Activated CD4-positive, alpha-beta T cell treated with anti-CD3 and anti-CD28 coated beads for 36 hours (primary cell): ENCODE measurements at regions of chr14 and their contacts with region 1.

Region 1: GRCh38 chr14:100239840-100240724 is 1.1 kb downstream of the YY1 start:
- DNase-seq: peak; percentile 93
- ATAC-seq: peak; percentile 40
- H3K4me3 Mint-ChIP-seq: peak overlapping the region; percentile 97
- H3K27ac Mint-ChIP-seq: peak overlapping the region; percentile 88
- H3K4me1 Mint-ChIP-seq: peaks cover 54% of the 10 kb centered on the region
- H3K27me3 Mint-ChIP-seq: no peaks in the 10 kb centered on the region

Region 2: DNA sequence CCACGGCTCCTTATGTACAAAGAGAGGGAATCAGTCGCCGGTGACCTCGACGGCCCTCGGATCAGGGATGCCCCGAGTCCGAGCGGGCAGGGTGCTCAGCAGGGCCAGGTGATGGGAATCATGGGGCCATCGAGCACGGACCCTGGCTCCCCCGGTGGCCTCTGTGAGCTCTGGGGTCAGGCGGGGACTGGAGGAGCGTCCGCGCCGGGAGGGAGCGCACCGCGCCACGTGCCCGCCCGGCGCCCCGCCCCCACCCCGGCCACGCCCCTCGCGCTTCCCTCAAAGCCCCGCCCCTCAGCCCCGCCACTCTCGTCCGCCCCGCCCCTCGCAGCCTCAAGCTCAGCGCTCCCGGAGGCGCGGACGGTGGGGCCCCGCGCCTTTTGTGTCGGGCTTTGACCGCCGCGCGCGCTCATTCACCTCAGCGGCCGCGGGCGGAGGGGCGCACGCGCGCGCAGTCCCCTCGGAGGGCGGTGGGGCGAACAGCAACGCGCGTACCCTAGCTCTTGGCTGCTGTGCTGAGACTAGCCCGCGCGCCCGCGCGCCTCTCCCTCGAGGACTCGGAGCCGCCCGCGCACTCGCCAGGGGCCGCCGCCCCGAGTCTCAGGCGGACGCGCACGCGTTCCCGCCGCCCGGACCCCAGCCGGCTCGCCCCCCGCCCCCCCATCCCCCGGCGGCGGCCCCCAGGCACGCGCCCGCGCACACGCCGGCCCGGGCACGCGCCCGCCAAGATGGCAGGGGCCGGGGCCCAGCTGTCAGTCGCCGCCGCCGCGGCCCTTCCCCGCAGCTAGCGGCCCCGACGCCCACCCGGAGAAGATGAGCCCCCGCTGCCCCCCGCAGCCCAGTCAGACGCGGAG is 268.8 kb before region 1 on chr14:
- CTCF ChIA-PET with region 1: no interaction called
- POLR2A ChIA-PET with region 1: no interaction called
- intact Hi-C with region 1: loop called in 1 of 2 experiments (anchors 1 kb)
- DNase-seq: peak; percentile 93
- ATAC-seq: peak; percentile 87
- H3K4me3 Mint-ChIP-seq: peak overlapping the region; percentile 98
- H3K27ac Mint-ChIP-seq: no peak overlapping the region
- H3K4me1 Mint-ChIP-seq: peaks cover 21% of the 10 kb centered on the region
- H3K27me3 Mint-ChIP-seq: peaks cover 21% of the 10 kb centered on the region

Region 3: GRCh38 chr14:100155042-100155846 is 84.8 kb before region 1 on chr14:
- CTCF ChIA-PET with region 1: no interaction called
- POLR2A ChIA-PET with region 1: no interaction called
- intact Hi-C with region 1: loop called in 1 of 2 experiments (anchors 1 kb)
- DNase-seq: peak; percentile 75
- ATAC-seq: no peak
- H3K4me3 Mint-ChIP-seq: no peak overlapping the region
- H3K27ac Mint-ChIP-seq: no peak overlapping the region
- H3K4me1 Mint-ChIP-seq: peaks cover 6% of the 10 kb centered on the region
- H3K27me3 Mint-ChIP-seq: peaks cover 15% of the 10 kb centered on the region

Region 4: DNA sequence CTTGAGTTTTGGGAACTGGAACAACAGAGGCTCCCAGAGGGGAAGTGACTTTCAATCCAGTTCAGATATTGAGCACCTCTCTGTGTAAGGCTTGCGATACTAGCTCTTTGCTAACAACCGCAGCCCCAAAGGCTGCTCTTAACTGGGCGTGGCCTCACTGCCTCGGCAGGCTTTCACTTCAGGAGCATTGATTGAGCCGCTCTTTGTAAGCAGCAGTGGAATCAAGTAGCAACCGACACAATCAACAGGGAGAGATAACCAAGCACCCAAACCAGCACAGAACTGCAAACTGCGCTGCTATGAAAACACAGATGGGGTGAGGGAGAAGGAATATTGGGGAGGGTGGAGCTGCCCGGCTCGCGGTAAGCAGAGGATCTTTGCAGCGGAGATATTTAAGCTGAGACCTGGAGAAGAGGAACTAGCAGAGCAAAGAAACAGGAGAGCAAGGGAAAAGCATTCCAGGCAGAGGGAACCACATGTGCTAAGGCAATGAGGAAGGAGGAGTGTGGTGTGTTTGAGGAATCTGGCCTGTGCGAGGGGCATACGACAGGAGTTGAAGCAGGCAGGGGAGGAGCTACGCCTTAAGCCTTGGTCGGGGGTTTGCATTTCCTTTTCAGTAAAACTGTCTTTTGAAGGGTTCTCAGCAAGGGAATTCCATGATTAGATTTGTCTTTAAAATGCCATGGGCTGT is 18.4 kb before region 1 on chr14:
- CTCF ChIA-PET with region 1: interaction called, 76 read pairs
- POLR2A ChIA-PET with region 1: interaction called, 41 read pairs
- intact Hi-C with region 1: loop called (anchors 1 to 2 kb)
- DNase-seq: peak; percentile 84
- ATAC-seq: peak; percentile 93
- H3K4me3 Mint-ChIP-seq: no peak overlapping the region
- H3K27ac Mint-ChIP-seq: no peak overlapping the region
- H3K4me1 Mint-ChIP-seq: peaks cover 7% of the 10 kb centered on the region
- H3K27me3 Mint-ChIP-seq: no peaks in the 10 kb centered on the region

Region 5: DNA sequence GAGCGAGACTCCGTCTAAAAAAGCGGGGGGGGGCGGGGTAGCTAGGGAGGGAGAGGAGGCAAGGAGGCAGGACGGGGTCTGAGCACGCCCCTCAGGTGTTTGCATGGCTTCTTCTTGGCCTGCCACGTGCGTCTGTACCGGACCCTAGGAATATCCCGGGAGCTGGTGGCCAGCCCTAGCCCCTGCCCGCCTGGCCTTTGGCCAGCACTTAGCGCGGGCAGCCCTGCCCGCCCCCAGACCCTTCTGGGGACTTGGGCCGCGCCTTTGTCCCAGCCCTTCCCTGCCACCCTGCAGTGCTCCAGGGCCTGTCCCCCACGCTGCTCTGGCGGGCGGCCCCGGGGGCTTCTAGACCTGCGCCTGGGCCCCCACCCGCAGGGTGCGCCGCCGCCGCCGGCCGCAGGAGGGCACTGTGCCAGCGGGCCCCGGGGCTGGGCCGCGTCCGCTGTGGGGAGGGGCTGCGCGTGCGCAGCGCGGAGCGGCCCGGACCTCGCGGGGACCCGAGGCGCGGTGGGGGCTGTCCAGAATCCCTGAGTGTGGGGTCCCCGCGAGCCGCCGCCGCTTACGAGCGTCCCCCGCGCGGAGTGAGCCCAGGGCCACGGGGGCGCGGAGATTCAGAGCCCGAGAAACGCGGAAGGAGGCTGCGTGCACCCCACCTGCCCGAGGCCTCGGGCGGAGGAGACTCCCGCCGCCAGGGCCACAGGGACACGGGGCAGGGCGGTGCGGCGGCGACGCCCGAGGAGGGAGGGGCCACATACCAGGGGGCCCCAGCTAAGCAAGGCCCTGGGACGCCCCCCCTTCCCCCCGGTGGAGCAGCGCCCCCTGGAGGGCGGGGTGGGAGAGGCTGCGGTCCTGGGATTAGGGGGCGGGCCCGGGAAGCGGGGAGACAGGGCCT is 45.2 kb after region 1 on chr14:
- CTCF ChIA-PET with region 1: interaction called, 11 read pairs
- POLR2A ChIA-PET with region 1: interaction called, 4 read pairs
- intact Hi-C with region 1: loop called (anchors 1 to 2 kb)
- DNase-seq: peak; percentile 88
- ATAC-seq: peak; percentile 89
- H3K4me3 Mint-ChIP-seq: peak overlapping the region; percentile 68
- H3K27ac Mint-ChIP-seq: no peak overlapping the region
- H3K4me1 Mint-ChIP-seq: peaks cover 7% of the 10 kb centered on the region
- H3K27me3 Mint-ChIP-seq: no peaks in the 10 kb centered on the region

Region 6: DNA sequence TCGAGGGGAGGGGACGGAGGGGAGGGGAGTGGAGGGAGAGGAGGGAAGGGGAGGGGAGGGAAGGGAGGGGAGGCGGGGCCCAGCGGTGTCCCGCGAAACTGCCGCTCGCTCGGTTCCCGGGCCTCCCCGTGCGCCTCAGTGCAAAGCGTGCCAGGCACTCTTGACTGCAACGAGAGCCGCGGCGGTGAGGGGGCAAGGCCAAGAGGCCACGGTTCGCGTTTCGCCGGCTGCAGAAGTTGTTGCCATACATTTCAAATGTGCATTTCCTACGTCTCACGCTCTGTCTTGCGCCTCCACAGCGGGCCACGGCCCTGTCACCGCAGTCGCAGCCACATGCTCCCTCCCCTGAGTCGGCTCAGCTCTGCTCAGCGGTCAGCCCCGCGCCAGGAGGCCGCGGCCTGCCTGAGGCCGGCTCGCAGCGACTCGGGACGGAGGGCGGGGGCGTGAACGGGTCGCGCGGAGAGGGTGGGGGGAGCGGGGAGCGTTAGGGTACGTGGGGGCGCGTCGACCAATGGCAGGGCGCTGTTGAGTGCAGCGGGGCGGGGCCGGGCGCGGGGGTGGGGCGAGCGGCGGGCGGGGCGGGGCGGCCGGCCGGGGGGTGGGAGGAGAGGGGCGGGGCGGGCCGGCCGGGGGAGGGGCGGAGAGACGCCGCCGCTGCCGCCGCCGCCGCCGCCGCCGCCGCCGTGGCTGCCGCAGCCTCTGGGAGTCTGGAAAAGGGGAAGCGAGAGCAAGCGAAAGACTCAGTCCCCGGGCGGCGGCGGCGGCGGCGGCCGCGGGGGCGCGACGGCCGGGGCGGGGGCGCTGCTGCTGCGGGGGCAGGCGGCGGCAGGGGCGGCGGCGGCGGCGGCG is 1521.2 kb after region 1 on chr14 and contains the start of gene PPP2R5C:
- CTCF ChIA-PET with region 1: no interaction called
- POLR2A ChIA-PET with region 1: no interaction called
- intact Hi-C with region 1: loop called in 1 of 2 experiments (anchors 5 kb)
- DNase-seq: peak; percentile 94
- ATAC-seq: peak; percentile 65
- H3K4me3 Mint-ChIP-seq: peak within 1 kb of the TSS; percentile 85
- H3K27ac Mint-ChIP-seq: peak within 1 kb of the TSS; percentile 78
- H3K4me1 Mint-ChIP-seq: peaks cover 43% of the 10 kb centered on the region
- H3K27me3 Mint-ChIP-seq: no peaks in the 10 kb centered on the region
- total RNA-seq, gene PPP2R5C: 232 to 281 TPM